ENCODE measurements at regions of chr6 and their contacts with region 1.

Region 1: DNA sequence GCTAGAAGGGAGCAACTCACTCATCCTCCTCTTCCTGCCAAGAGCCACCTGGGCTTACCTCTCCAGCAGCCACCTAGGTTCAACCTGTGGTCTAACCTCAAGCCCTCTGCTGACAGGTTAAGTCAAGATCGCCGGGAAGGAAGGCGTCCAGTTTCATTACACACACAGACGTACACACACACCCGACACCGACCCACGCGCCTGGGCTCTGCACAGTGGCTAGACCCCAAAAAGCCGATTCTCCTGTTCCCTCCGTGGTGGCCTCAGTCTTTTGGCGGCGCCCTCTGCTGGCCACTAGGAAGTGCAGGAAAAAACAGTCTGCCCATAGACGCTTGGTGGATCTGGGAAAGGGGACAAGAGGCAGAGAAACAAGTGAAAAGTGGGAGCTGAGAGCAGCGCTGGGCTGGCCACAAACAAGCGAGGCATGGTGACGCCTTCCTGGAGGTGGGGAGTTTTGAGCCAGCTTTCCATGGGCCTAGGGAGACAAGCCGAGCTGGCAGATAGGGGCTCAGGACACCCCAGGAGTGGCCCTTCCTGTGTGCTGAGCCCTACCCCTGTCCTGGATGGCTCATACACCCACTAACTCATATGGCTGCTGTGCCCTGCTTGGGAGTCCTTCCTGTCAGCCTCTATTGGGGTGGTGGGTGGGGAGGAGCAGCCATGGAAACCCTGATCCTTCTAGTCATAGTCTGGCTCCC is 52.7 kb downstream of the MRPL14 start:
- DNase-seq: peak; percentile 63 to 78
- ATAC-seq: peak; percentile 21

Region 2: DNA sequence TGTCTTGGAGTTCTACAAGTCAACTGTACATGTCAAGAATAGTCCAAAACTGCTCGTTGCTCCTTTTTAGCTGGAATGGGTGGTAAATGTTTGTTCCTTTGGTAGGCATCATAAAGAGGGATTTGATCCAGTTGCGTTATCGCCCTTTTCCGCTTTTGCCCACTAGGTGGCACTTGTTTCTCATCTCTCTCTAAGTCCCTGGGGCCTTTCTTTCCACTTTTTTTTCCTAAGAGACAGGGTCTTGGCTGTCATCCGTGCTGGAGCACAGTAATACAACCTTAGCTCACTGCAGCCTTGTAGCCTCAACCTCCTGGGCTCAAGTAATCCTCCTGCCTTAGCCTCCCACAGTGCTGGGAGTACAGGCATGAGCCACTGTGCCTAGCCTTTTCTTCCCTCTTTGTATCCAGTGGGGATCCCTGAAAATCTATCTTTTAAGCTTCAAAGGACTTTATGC is 466.3 kb before region 1 on chr6:
- intact Hi-C with region 1: loop called in 1 of 2 experiments (anchors 5 kb)
- DNase-seq: peak; percentile 41 to 77
- ATAC-seq: peak; percentile 74

Region 3: GRCh38 chr6:43667245-43668150 is 407.1 kb before region 1 on chr6:
- intact Hi-C with region 1: loop called in 1 of 2 experiments (anchors 10 kb)
- DNase-seq: peak; percentile 73 to 91
- ATAC-seq: peak; percentile 72

Region 4: DNA sequence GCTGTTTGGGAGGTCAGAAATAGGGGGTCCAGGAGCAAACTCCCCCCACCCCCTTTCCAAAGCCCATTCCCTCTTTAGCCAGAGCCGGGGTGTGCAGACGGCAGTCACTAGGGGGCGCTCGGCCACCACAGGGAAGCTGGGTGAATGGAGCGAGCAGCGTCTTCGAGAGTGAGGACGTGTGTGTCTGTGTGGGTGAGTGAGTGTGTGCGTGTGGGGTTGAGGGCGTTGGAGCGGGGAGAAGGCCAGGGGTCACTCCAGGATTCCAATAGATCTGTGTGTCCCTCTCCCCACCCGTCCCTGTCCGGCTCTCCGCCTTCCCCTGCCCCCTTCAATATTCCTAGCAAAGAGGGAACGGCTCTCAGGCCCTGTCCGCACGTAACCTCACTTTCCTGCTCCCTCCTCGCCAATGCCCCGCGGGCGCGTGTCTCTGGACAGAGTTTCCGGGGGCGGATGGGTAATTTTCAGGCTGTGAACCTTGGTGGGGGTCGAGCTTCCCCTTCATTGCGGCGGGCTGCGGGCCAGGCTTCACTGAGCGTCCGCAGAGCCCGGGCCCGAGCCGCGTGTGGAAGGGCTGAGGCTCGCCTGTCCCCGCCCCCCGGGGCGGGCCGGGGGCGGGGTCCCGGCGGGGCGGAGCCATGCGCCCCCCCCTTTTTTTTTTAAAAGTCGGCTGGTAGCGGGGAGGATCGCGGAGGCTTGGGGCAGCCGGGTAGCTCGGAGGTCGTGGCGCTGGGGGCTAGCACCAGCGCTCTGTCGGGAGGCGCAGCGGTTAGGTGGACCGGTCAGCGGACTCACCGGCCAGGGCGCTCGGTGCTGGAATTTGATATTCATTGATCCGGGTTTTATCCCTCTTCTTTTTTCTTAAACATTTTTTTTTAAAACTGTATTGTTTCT is 304.8 kb before region 1 on chr6 and contains the start of gene VEGFA:
- intact Hi-C with region 1: loop called in 1 of 2 experiments (anchors 5 kb)
- DNase-seq: peak; percentile 85 to 95
- ATAC-seq: peak; percentile 58
- total RNA-seq, gene VEGFA: 107 to 110 TPM